ENCODE measurements at regions of chr2 and their contacts with region 1.

Region 1: DNA sequence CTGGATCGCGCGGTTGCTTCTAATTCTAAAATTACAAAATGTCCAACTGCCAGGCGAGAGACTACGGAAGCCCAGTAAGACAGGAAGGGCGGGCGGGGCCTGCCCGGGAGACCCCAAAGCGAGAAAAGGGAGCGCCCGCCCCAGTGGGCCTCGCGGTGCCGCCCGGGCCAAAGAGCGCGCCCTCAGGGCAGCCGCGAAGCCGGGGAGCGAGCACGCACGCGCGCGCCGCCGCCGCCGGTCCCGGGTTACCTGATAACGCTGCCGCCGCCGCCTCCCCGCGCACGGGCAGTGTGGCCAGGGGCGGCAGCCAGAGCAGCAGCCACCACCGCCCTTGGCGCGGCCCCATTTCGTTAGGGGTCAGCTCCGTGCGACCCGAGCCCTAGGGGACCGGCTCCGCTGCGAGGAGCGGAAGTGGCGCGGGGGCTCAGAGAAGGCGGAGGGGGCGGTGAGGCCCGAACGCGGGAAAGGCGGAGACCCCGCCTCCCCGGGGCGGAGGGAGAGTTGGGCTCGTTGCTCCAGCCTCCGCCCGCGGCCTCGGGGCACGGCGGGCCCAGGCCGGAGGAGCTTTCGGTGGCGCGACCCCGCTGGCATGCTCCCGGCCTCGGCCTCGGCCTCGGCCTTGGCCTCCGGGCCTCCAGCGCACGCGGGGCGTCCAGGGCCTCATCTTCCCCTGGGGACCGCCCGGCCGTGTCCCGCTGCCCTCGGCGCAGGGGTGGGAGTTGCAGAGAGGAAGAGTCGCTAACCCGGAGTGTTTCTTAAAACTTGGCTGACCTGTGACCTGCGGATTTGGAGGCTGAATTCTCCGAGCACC is at the start of gene NEMP2:
- DNase-seq: peak; percentile 82
- H3K4me3 Mint-ChIP-seq: peak within 1 kb of the TSS; percentile 96
- H3K27ac Mint-ChIP-seq: peak within 1 kb of the TSS; percentile 100
- H3K4me1 Mint-ChIP-seq: peaks cover 51% of the 10 kb centered on the region
- H3K27me3 Mint-ChIP-seq: no peaks in the 10 kb centered on the region
- total RNA-seq, gene NEMP2: 32.9 to 34.2 TPM

Region 2: GRCh38 chr2:189440947-189441708 is 1093.4 kb before region 1 on chr2 and contains the start of gene WDR75:
- CTCF ChIA-PET with region 1: no interaction called
- intact Hi-C with region 1: loop called (anchors 10 kb)
- DNase-seq: peak; percentile 95
- H3K4me3 Mint-ChIP-seq: no peak within 1 kb of the TSS
- H3K27ac Mint-ChIP-seq: peak within 1 kb of the TSS; percentile 97
- H3K4me1 Mint-ChIP-seq: peaks cover 12% of the 10 kb centered on the region
- H3K27me3 Mint-ChIP-seq: no peaks in the 10 kb centered on the region
- total RNA-seq, gene WDR75: 69.7 to 72.7 TPM

Region 3: DNA sequence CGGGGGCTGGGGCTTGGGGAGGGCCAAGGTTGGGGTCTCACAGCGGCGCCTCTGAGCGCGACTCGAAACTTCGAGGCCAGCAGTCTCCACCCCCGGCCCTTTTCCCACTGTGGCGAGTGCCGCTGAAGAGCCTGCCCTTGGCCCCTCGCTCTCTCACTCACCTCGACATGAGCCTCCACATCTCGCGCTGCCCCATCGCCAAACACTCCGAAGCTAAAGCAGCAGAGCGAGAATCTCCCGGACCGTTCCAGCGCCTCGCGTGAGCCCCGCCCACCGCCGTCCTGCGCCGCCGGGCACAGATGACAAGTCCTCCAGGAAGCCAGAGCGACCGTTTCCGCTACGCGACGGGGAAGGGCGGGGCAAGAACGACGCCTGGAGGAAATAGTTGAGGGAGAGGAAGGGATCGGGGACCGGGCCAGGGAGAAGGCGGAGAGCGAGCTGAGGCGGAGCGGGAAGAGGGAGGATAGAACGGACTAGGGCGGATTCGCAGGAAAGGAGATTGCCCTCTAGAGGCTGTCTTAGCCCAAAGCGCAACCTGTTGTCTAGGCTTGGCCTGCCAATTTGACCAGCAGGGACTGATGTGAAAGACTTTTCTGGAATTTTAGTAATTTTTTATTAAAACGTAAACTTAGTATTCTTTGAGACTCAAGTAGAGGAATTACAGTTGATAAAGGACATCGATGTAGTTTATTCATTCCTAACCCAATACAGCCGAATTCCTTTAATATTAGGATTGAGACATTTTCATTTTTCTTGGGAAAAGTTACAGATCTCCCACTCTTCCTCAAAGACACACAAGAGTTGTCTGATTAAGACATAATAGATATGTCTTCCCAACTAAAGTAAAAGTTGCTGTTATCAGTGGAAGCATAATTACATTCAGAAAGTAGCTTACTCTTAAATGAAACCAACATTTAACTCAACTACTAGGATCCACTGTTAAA is 214.7 kb before region 1 on chr2 and contains the start of gene HIBCH:
- CTCF ChIA-PET with region 1: no interaction called
- intact Hi-C with region 1: loop called (anchors 1 kb)
- DNase-seq: peak; percentile 94
- H3K4me3 Mint-ChIP-seq: peak within 1 kb of the TSS; percentile 91
- H3K27ac Mint-ChIP-seq: peak within 1 kb of the TSS; percentile 88
- H3K4me1 Mint-ChIP-seq: peaks cover 39% of the 10 kb centered on the region
- H3K27me3 Mint-ChIP-seq: no peaks in the 10 kb centered on the region
- total RNA-seq, gene HIBCH: 19.2 TPM

Region 4: GRCh38 chr2:190519975-190520767 is 14.3 kb before region 1 on chr2:
- CTCF ChIA-PET with region 1: interaction called, 7 read pairs
- intact Hi-C with region 1: loop called (anchors 1 kb)
- DNase-seq: no peak
- H3K4me3 Mint-ChIP-seq: no peak overlapping the region
- H3K27ac Mint-ChIP-seq: peak overlapping the region; percentile 0
- H3K4me1 Mint-ChIP-seq: peaks cover 44% of the 10 kb centered on the region
- H3K27me3 Mint-ChIP-seq: no peaks in the 10 kb centered on the region

Region 5: DNA sequence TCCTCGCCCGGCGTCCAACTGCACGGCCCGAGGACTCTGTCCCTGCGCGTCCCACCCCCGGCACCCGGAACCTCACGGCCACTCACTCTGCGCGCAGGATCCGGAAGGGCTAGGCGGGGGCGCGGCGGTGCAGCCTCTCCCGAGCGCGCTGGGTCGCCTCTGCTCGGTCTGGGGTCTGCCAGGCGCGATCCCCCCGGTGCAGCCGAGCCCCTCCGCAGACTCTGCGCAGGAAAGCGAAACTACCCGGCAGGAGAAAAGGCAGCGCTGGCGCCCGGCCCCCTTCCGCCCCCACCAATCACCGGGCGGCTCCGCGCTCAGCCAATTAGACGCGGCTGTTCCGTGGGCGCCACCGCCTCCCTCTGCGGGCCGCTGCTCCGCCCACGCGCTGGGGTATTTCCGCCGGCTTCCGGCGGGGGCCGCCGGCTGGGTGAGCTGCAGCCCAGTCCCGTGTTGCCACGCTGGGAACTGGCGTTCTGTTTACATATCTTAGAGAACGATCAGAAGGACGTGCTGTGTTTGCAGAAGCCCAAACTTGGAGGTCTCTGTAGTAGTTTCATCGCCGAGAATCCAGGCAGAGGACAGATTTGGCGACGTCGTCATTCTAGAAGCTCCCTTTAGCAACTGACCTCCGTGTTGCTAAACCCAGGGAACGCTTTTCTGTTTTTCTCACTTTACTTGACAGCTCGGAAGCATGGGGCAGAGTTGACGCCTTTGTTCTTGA is 479.6 kb after region 1 on chr2 and contains the start of gene STAT1:
- CTCF ChIA-PET with region 1: no interaction called
- intact Hi-C with region 1: loop called (anchors 2 kb)
- DNase-seq: peak; percentile 95
- H3K4me3 Mint-ChIP-seq: no peak within 1 kb of the TSS
- H3K27ac Mint-ChIP-seq: no peak within 1 kb of the TSS
- H3K4me1 Mint-ChIP-seq: peaks cover 39% of the 10 kb centered on the region
- H3K27me3 Mint-ChIP-seq: no peaks in the 10 kb centered on the region
- total RNA-seq, gene STAT1: 376 to 402 TPM

Region 6: DNA sequence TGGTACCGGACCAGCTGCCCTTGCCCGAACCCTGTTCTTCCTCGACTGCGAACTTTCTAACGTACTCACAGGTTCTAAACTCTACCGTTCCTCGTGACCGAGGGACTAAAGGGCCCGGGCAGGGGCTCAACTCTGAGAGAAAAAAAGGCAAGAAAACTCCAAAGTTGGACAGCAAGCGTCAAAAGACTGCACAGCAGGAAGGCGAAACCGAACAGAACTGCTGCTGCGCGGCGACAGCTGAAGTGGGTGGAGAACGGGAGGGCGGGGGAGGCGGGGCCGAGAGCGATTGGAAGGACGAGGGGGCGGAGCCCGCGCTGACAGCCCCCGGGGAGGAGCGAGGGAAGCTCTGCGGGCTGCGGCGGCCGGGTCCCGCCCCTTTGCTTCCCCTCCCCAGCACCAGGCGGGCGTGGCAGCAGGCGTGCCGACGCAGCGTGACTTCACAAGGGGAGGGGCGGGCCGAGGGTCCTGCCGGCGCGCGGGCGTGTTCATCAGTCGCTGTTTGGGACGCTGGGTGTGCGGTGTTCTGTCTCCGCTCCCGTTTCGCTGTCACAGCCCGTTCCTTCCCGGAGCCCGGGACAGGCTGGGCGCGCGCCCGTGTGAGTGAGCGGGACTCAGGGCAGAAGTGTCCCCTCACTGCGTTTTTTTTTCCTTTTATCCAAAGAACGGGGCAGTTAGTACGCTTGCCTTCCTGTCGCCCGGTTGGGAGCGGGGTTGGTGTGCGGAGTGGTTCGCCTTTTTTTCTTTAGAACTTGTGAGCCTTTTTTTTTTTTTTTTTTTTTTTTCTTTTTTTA is 1143.3 kb after region 1 on chr2 and contains the start of gene NABP1:
- CTCF ChIA-PET with region 1: no interaction called
- intact Hi-C with region 1: loop called (anchors 5 kb)
- DNase-seq: peak; percentile 99
- H3K4me3 Mint-ChIP-seq: peak within 1 kb of the TSS; percentile 99
- H3K27ac Mint-ChIP-seq: peak within 1 kb of the TSS; percentile 100
- H3K4me1 Mint-ChIP-seq: peaks cover 37% of the 10 kb centered on the region
- H3K27me3 Mint-ChIP-seq: no peaks in the 10 kb centered on the region
- total RNA-seq, gene NABP1: 97.5 to 101 TPM